Vagina (tissue), 2 donors: ENCODE measurements at regions of chr1 and their contacts with region 1.

Region 1: GRCh38 chr1:65979136-65980044 is 186.7 kb downstream of the PDE4B start:
- DNase-seq: no peak
- H3K4me3 ChIP-seq: no peak overlapping the region
- H3K27ac ChIP-seq: no peak overlapping the region
- H3K4me1 ChIP-seq: no peaks in the 10 kb centered on the region
- H3K27me3 ChIP-seq: no peaks in the 10 kb centered on the region
- CTCF ChIP-seq: no peak
- POLR2A ChIP-seq: no peak

Region 2: GRCh38 chr1:65717815-65718454 is 261.5 kb before region 1 on chr1:
- intact Hi-C with region 1: loop called (anchors 5 kb)
- DNase-seq: no peak
- H3K4me3 ChIP-seq: no peak overlapping the region
- H3K27ac ChIP-seq: no peak overlapping the region
- H3K4me1 ChIP-seq: no peaks in the 10 kb centered on the region
- H3K27me3 ChIP-seq: no peaks in the 10 kb centered on the region
- CTCF ChIP-seq: no peak
- POLR2A ChIP-seq: no peak

Region 3: DNA sequence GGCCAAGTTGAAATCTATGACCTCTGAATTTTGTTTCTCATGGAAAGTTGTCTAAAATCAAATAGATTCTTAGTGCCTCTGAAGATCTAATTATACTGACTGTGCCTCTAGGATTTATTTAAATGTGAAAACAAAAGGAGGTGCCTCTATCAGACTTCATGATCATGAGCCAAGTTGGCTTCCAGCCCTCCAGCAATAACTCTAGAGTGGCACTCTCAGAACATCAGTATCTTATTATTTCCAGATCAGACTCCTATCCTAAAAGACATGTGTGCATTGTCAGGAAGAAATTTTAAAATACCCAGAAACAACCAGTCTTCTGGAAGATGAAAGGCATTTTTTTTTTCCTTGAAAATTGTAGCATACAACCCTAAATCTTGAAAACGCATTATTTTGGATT is 181.3 kb after region 1 on chr1:
- intact Hi-C with region 1: no loop called
- DNase-seq: no peak
- H3K4me3 ChIP-seq: no peak overlapping the region
- H3K27ac ChIP-seq: no peak overlapping the region
- H3K4me1 ChIP-seq: no peaks in the 10 kb centered on the region
- H3K27me3 ChIP-seq: no peaks in the 10 kb centered on the region
- CTCF ChIP-seq: no peak
- POLR2A ChIP-seq: no peak